ENCODE measurements at regions of chr10 and their contacts with region 1.

Region 1: DNA sequence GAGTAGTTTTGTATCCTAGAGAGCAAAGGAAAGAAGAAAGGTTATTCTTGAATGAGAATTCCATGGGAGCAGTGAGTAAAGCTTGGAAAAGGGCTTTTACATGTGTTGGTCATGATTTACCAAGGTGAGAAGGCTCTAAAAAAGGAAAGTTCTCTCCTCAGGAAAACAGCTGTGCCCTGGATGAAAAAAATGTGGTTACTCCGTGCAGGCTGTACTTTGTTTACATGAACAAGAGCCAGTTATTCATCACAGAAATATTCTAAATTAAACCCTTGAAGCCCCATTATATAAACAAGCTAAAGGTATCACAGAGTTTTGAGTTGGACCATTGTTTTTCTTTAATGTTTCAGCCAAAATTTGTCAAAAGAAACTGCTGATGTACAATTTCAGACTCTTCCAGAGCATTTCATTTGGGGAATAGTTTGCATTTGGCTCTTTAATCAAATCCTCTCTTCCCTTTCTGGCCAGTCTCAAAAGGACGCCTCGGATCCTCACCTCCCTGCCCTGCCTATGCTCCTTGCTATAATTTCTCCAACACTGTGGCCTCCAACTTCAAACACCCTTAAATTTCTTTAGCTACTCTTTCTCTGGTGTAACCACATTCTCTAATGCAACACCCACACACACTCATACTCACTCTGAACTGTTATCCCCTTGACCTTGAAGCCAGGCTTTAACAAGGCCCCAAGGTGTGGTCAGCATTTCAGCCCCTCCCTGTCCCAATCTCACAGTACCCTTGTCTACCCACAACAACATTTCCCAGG is 47.4 kb downstream of the AFAP1L2 start:
- DNase-seq: no peak
- H3K4me3 Mint-ChIP-seq: no peak overlapping the region
- H3K27ac Mint-ChIP-seq: no peak overlapping the region
- H3K4me1 Mint-ChIP-seq: peaks cover 10% of the 10 kb centered on the region
- H3K27me3 Mint-ChIP-seq: peaks cover 10% of the 10 kb centered on the region

Region 2: DNA sequence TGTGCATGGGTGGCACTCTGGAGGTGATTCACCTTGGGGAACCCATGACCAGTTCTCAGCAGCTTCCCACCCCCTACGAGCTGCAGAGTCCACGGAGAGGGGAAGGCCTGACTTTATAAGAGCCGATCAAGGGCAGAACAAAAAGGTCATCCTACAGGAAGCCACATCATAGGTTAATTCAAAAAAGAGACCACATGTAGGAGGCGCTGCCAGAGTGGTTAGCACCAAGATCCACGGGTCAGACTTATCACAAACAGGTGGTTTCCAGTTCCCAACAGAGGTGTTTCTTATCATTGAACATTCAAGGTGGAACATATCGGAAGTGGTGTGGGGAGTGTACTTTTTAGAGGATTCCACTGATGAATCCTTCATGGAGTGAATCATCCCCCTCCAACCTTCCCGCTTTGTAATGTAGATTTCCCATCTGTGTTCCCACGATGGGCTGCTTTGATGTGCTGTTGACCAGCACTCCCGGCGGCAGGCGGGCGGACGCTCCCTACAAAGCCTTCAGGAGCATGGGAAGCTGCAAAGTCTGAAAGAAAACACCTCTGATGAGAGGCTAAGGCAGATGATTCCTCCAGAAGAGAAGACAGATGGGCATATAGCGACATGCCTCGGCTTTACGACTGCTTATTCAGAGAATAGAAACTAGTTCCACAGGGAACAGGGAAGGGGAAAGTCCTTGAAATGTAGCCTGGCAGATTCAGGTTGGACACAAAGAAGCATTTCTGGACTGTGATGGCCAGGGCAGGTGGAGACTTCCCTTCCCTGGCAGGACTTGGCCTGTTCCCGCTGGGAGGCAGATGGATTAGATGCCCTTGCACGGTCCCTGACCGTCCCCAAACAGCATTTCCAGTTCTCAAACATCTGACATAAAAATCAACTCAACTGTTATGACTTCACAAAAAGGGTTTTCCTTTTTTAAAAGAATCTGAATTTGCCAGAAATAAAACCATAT is 19.1 kb before region 1 on chr10:
- intact Hi-C with region 1: loop called (anchors 1 kb)
- DNase-seq: no peak
- H3K4me3 Mint-ChIP-seq: no peak overlapping the region
- H3K27ac Mint-ChIP-seq: peak overlapping the region; percentile 46
- H3K4me1 Mint-ChIP-seq: peaks cover 33% of the 10 kb centered on the region
- H3K27me3 Mint-ChIP-seq: peaks cover 2% of the 10 kb centered on the region

Region 3: DNA sequence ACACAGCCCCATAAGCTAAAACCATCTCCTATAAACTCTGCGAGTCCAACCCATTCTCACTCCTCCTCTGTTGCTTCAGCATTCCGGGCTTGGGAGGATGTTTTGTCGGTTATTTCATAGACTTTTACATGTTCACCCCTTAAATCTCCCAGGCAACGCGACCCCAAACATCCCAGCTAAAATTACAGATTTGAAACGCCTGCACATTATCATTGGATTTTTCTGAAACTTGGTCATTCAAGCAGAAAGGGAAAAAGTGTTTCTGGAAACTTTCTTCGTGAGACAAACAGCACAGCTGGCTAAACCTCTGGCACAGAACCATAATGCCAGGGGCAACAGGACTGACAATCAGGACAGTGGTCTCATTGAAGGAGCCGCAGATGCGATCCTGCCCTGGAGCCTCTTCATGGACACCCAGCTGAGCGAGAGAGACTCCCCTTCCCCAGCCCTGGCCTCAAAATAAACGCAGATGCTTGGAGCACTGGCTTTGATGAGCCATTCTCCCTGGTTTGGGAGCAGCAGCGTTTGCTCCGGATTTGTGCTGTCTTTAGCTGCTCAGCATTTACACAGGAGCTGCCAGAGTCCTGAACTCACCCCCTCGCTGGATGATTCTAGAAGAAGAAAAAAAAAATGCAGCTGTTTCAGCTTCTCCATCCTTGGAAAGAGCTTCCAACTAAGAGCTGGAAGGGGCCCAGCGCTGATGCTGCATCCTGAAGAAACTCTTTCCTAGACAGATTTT is 17.3 kb after region 1 on chr10:
- intact Hi-C with region 1: no loop called
- DNase-seq: no peak
- H3K4me3 Mint-ChIP-seq: no peak overlapping the region
- H3K27ac Mint-ChIP-seq: no peak overlapping the region
- H3K4me1 Mint-ChIP-seq: peaks cover 5% of the 10 kb centered on the region
- H3K27me3 Mint-ChIP-seq: peaks cover 5% of the 10 kb centered on the region

Measured in activated T-helper 2 cell treated with anti-CD3 and anti-CD28 coated beads, Interferon-gamma antibody, Interleukin-2, Interleukin-4, amounts not matched to agents 10 μg/mL and 5 μg/mL and 100 μg/mL, durations not matched to agents 14 hours and 24 hours and 36 hours (primary cell).